Activated CD8-positive, alpha-beta T cell treated with anti-CD3 and anti-CD28 coated beads, Interleukin-2, amount 10 ng/mL, durations not matched to agents 7 days and 5 days (primary cell): ENCODE measurements at regions of chr16 and their contacts with region 1.

Region 1: DNA sequence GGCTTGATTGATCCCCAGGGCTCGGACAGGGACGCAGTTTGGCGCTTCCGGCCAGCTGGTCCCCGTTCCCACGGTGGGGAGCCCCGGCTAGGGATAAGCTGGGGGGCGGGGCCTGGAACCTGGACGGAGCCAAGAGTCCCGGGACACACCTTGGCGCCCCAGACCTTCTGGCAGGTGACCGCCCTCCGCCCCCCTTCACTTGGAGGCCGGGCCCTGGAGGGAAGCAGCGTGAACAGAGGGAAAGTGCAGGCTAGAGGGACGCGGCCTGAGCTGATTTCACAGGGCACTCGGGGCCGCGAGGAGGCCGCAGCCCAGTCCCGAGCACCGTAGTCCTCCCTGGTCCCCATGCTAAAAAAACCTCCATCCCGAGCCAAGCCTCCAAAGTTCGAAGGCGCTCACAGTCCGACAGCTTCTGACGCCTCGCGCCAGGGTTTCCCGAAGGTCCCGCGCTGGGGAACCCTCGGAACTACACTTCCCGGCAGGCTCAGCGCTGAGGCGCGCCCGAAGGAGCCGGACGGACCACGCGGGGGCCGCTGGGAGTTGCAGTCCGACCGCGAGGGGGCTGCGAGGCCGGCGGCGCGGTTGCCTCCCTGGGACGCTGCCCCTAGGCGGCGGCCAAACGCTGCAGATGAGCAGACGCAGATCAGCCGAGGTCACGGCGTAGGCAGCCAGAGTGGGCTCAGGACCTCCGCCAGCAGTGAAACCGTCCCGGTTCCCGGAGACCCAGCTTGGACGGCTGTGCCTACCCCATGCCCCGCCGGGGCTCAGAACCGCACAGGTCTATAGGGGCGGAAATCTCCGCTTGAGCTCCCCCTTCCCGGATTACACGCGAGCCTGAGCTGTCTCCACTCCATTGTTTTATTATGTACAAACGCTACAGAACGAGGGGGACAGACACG is at the start of gene TBX6:
- DNase-seq: peak; percentile 96
- ATAC-seq: peak; percentile 84
- H3K4me3 Mint-ChIP-seq: peak within 1 kb of the TSS; percentile 89
- H3K27ac Mint-ChIP-seq: peak within 1 kb of the TSS; percentile 95
- H3K4me1 Mint-ChIP-seq: peaks cover 64% of the 10 kb centered on the region
- H3K27me3 Mint-ChIP-seq: no peaks in the 10 kb centered on the region
- total RNA-seq, gene TBX6: 1.3 TPM

Region 2: DNA sequence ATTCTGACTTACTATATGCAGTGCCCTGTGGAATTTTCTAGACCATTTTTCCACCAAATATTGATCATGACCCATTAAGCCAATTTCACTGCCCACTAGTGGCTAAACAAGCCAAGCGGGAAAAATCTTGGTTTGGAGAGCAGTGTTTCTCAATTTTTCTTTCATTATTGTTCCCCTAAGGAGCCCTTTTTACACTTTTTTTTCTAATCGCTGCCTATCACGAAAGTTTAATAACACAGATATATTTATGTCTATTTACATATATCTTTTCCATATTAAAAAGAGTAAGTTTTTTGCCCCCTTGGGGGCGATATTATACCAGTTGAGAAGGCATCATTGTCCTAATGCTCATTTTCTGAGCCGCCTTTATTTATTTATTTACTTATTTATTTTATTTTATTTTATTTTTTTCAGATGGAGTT is 49.9 kb before region 1 on chr16:
- CTCF ChIA-PET with region 1: interaction called, 12 read pairs
- POLR2A ChIA-PET with region 1: no interaction called
- DNase-seq: no peak
- ATAC-seq: no peak
- H3K4me3 Mint-ChIP-seq: no peak overlapping the region
- H3K27ac Mint-ChIP-seq: no peak overlapping the region
- H3K4me1 Mint-ChIP-seq: no peaks in the 10 kb centered on the region
- H3K27me3 Mint-ChIP-seq: peaks cover 13% of the 10 kb centered on the region

Region 3: DNA sequence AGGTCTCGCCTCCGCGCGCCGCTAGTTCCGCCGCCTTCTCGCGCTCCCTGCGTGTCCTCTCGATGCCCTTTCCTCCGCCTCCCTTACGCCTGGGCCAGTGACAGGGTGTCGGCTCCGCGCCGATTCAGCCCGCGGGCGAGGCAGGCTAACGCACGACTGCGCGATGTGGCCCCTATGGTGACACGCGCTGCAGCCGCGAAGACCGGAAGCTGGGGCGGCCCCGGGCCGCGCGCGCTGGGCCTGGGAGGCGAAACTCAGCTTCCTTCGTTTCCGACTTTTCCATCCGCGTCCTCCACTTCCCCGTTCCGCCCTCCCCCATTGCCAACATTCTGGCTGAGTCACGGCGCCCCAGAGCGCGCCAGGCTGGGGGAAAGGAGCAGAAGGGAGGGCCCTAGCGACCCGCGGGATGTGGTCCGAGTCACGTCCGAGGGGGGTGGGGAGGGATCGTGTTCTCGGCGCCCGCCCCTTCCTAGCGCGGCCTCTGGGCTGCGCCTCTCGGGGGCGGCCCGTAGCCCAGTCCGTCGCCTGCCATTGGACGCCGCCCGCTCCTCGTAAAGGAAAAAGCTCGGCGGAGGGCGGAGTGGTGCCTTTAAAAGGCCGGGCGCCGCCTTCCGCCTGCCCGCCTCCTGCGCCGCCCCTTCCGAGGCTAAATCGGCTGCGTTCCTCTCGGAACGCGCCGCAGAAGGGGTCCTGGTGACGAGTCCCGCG is 26.4 kb before region 1 on chr16 and contains the start of gene ALDOA:
- CTCF ChIA-PET with region 1: interaction called, 64 read pairs
- POLR2A ChIA-PET with region 1: interaction called, 60 read pairs
- DNase-seq: peak; percentile 98
- ATAC-seq: peak; percentile 88
- H3K4me3 Mint-ChIP-seq: peak within 1 kb of the TSS; percentile 99
- H3K27ac Mint-ChIP-seq: peak within 1 kb of the TSS; percentile 98
- H3K4me1 Mint-ChIP-seq: peaks cover 44% of the 10 kb centered on the region
- H3K27me3 Mint-ChIP-seq: no peaks in the 10 kb centered on the region
- total RNA-seq, gene ALDOA: 1,738 to 1,843 TPM

Region 4: GRCh38 chr16:30104494-30104968 is 12.8 kb after region 1 on chr16:
- CTCF ChIA-PET with region 1: interaction called, 27 read pairs
- POLR2A ChIA-PET with region 1: no interaction called
- DNase-seq: no peak
- ATAC-seq: no peak
- H3K4me3 Mint-ChIP-seq: no peak overlapping the region
- H3K27ac Mint-ChIP-seq: no peak overlapping the region
- H3K4me1 Mint-ChIP-seq: no peaks in the 10 kb centered on the region
- H3K27me3 Mint-ChIP-seq: no peaks in the 10 kb centered on the region

Region 5: GRCh38 chr16:30142672-30143346 is 51.1 kb after region 1 on chr16:
- CTCF ChIA-PET with region 1: interaction called, 10 read pairs
- POLR2A ChIA-PET with region 1: interaction called, 5 read pairs
- DNase-seq: peak; percentile 49
- ATAC-seq: peak; percentile 83
- H3K4me3 Mint-ChIP-seq: peak overlapping the region; percentile 6
- H3K27ac Mint-ChIP-seq: peak overlapping the region; percentile 27
- H3K4me1 Mint-ChIP-seq: peaks cover 24% of the 10 kb centered on the region
- H3K27me3 Mint-ChIP-seq: no peaks in the 10 kb centered on the region

Region 6: GRCh38 chr16:30407102-30407803 is 315.5 kb after region 1 on chr16 and contains the start of gene ZNF771:
- CTCF ChIA-PET with region 1: interaction called, 23 read pairs
- POLR2A ChIA-PET with region 1: no interaction called
- DNase-seq: peak; percentile 93
- ATAC-seq: peak; percentile 91
- H3K4me3 Mint-ChIP-seq: peak within 1 kb of the TSS; percentile 83
- H3K27ac Mint-ChIP-seq: peak within 1 kb of the TSS; percentile 91
- H3K4me1 Mint-ChIP-seq: peaks cover 29% of the 10 kb centered on the region
- H3K27me3 Mint-ChIP-seq: peaks cover 11% of the 10 kb centered on the region
- total RNA-seq, gene ZNF771: 3.3 to 3.9 TPM